ENCODE measurements at regions of chr2 and their contacts with region 1.

Region 1: DNA sequence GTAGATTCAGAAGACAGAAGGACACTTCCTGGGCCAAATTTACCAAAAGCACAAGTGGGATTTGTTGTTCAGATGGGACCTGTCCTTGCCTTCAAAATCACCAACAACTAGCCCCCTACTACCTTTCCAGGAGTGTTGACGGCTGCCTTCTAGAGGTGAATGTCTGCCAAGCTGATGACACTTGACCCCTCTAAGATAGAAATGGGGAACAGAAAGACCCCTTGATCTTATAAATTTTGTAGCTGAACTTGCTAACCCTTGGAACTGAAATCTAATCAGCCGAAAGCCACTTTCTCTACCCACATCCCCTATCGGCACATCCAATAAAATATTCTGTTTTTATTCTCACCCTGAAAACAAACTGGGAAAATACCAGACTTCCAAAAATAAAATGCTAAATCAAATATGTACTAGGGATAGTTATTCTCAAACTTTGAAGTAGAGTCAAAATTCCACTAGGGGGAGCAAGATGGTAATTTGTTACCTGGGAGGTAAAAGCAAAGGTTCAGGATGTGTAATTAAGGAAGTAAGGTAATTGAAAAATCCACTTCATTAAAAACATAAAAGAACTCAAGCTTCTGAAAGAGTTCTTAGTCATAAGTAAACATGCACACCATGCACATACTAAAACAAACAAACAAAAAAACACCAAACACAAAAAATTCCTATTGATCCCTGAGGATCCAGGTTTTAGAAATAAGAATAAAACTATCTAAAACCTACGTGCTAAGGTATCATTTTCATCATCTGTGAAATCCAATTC is 119.2 kb downstream of the ANKRD44 start:
- DNase-seq: peak; percentile 61
- H3K4me3 Mint-ChIP-seq: no peak overlapping the region
- H3K27ac Mint-ChIP-seq: no peak overlapping the region
- H3K4me1 Mint-ChIP-seq: no peaks in the 10 kb centered on the region
- H3K27me3 Mint-ChIP-seq: no peaks in the 10 kb centered on the region
- CTCF ChIP-seq: peak; percentile 67

Region 2: DNA sequence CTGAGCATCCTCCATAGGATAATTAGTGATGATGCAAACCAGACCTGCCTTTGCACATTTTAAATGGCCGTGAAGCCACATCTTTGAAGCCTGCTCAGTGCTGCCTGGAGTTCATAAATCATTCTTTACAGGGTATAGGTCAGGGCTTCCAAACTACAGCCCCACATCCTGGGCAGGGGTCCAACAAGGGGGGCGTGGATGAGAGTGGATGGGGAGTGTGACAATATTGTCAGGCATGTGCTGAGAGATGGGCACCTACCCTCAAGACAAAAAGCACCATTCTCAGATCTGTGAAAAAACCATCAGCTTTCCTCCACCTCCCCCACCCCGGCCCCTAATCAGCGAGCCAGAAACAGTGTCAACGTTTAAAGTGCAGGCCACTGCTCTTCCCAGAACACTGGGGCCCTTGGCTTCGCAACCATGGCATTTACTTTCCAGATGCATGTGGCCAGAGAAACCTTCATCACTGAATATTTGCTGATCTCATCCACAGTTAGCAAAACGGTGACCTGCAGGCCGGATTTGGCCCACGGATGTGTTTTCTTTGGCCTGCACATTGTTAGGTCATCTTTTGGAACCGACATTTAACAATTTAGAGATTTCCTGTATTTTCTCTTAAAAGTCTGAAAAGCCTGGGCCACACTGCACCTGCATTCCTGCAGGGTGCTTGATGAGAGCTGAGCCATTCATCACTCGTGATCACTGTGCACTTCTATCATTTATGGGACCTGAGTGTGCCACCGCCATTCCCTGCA is 11.4 kb before region 1 on chr2:
- CTCF ChIA-PET with region 1: interaction called, 19 read pairs
- POLR2A ChIA-PET with region 1: no interaction called
- intact Hi-C with region 1: no loop called
- DNase-seq: peak; percentile 31
- H3K4me3 Mint-ChIP-seq: no peak overlapping the region
- H3K27ac Mint-ChIP-seq: no peak overlapping the region
- H3K4me1 Mint-ChIP-seq: peaks cover 8% of the 10 kb centered on the region
- H3K27me3 Mint-ChIP-seq: no peaks in the 10 kb centered on the region
- CTCF ChIP-seq: no peak

Region 3: DNA sequence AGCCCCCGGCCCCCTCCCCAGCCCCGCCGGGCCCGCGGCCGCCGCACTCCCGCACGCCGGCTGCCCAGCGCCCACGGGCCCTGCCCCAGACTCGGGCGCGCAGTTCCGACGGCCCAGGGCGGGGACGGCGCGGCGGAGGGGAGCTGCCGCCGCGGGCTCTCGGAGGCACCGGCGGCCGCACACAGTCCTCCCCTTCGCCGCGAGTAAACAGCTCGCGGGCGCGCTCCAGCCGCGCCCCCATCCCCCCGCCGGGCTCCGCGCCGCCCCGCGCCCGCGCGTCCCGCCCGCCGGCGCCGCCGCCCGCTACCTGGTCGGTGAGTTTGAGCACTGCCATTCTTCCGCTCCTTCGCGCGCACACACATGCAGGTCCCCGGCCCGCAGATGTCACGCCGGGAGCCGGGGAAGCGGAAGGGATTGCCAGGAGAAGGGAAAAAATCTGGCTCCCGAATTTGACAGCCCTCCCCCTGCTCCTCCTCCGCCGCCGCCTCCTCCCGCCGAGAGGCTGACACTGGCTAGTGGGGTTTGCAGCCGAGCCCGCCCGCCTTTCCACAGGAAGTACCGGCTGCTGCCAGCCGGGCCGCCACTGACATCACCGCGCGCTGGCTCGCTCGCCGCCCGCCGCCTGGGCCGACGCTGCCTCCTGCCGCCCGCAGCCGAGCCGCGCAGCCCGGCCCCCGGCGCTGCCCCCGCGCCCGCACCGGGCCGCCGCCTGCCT is 119.1 kb after region 1 on chr2 and contains the start of gene ANKRD44:
- CTCF ChIA-PET with region 1: interaction called, 66 read pairs
- POLR2A ChIA-PET with region 1: interaction called, 4 read pairs
- intact Hi-C with region 1: loop called (anchors 1 kb)
- DNase-seq: peak; percentile 79
- H3K4me3 Mint-ChIP-seq: peak within 1 kb of the TSS; percentile 78
- H3K27ac Mint-ChIP-seq: peak within 1 kb of the TSS; percentile 3
- H3K4me1 Mint-ChIP-seq: peaks cover 10% of the 10 kb centered on the region
- H3K27me3 Mint-ChIP-seq: no peaks in the 10 kb centered on the region
- CTCF ChIP-seq: peak; percentile 23
- total RNA-seq, gene ANKRD44: 4.4 and 6.9 TPM in 2 replicates

Region 4: DNA sequence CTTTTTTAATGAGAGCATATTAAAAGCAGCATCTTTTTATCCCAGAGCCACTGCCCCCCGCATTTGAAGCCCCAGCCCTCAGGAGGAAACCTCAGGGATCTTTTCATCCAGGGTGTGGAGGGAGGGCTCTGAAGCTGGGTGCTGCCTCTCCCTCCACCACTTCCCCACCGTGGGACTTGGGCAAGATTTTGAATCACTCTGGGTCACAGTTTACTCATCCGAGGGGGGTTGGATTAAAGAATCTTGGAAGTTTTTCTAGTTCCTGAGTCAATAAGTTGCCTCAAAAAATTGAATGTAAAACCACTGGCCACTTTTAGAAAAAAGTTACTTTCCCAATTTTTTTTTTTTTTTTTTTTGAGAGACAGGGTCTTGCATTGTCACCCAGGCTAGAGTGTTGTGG is 181.2 kb after region 1 on chr2:
- CTCF ChIA-PET with region 1: interaction called, 32 read pairs
- POLR2A ChIA-PET with region 1: no interaction called
- intact Hi-C with region 1: no loop called
- DNase-seq: no peak
- H3K4me3 Mint-ChIP-seq: no peak overlapping the region
- H3K27ac Mint-ChIP-seq: no peak overlapping the region
- H3K4me1 Mint-ChIP-seq: no peaks in the 10 kb centered on the region
- H3K27me3 Mint-ChIP-seq: no peaks in the 10 kb centered on the region
- CTCF ChIP-seq: no peak

Region 5: DNA sequence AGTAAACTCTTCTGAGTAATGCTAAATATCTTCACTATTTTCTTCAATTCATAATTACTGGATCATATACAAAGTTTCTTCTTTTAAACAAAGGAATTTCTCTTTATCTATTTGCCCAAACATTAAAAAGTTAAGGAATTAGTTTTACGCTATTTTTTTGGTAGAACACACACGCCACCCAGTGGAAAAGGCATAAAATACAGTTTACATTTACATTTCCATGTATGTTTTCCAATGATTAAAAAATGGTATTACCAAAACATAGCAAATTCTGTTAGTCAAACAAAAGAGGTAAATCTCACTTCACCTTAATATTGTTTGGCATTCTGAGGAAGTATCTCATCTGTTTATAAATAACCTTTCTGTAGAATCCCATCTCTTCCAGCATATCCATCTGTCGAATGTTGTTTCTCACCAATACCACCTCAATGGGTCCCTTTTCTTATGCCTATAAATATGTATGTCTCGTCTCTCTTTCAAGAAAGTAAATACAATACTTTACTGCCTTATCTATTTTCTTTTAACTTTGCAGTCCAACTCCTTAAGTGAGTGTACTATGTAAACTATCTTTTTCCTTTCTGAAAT is 586.6 kb after region 1 on chr2:
- CTCF ChIA-PET with region 1: interaction called, 3 read pairs
- POLR2A ChIA-PET with region 1: no interaction called
- intact Hi-C with region 1: loop called (anchors 2 kb)
- DNase-seq: peak; percentile 65
- H3K4me3 Mint-ChIP-seq: no peak overlapping the region
- H3K27ac Mint-ChIP-seq: no peak overlapping the region
- H3K4me1 Mint-ChIP-seq: peaks cover 6% of the 10 kb centered on the region
- H3K27me3 Mint-ChIP-seq: peaks cover 11% of the 10 kb centered on the region
- CTCF ChIP-seq: peak; percentile 64